Breast epithelium (tissue), 4 donors: ENCODE measurements at regions of chr1 and their contacts with region 1.

Region 1: GRCh38 chr1:234670967-234671626 is 61.1 kb upstream of the IRF2BP2 start:
- DNase-seq: no peak
- H3K4me3 ChIP-seq: no peak overlapping the region
- H3K27ac ChIP-seq: peak overlapping the region in 1 of 2 donors; percentile 10
- H3K4me1 ChIP-seq: no peaks in the 10 kb centered on the region
- H3K27me3 ChIP-seq: no peaks in the 10 kb centered on the region
- CTCF ChIP-seq: no peak
- POLR2A ChIP-seq: no peak

Region 2: GRCh38 chr1:234656856-234657654 is 14.0 kb before region 1 on chr1:
- intact Hi-C with region 1: loop called (anchors 1 kb)
- DNase-seq: peak in 1 of 2 donors; percentile 59
- H3K4me3 ChIP-seq: no peak overlapping the region
- H3K27ac ChIP-seq: peak overlapping the region; percentile 78 to 80
- H3K4me1 ChIP-seq: peaks cover 0 to 20% of the 10 kb centered on the region in 2 donors
- H3K27me3 ChIP-seq: no peaks in the 10 kb centered on the region
- CTCF ChIP-seq: no peak
- POLR2A ChIP-seq: no peak

Region 3: GRCh38 chr1:234683861-234684632 is 12.9 kb after region 1 on chr1:
- intact Hi-C with region 1: loop called (anchors 1 kb)
- DNase-seq: peak; percentile 61 to 82
- H3K4me3 ChIP-seq: no peak overlapping the region
- H3K27ac ChIP-seq: peak overlapping the region; percentile 53 to 85
- H3K4me1 ChIP-seq: peaks cover 0 to 4% of the 10 kb centered on the region in 2 donors
- H3K27me3 ChIP-seq: no peaks in the 10 kb centered on the region
- CTCF ChIP-seq: no peak
- POLR2A ChIP-seq: no peak